A673 (cell line): ENCODE measurements at regions of chr12 and their contacts with region 1.

Region 1: DNA sequence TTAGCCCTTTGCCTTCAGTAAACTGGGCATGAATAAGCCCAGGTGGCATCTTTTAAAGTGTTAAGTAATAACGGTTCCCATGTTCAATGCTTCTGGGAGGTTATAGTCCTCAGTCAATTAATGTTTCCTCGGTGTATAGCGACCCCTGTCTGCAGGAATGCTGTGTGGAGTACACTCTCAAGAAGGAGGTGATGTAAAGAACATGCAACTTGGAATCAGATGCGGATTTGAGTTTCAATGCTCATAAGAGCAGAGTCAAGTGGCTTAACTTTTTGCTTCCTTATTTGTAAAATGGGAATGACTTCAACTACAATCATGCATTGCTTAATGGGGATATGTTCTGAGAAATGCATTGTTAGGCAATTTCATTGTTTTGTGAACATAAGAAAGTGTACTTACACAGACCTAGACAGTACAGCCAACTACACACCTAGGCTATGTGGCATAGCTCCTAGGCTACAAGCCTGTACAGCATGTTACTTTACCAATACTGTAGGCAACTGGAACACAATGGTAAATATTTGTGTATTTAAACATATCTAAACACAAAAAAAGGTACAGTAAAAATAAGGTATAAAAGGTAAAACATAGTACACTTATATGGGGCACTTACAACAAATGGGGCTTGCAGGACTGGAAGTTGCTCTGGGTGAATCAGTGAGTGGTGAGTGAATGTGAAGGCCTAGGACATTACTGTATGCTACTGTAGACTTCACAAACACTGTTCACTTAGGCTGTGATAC is 6.8 kb upstream of the MRPS35 start:
- DNase-seq: peak; percentile 89
- H3K4me3 ChIP-seq: no peak overlapping the region
- H3K27ac ChIP-seq: peak overlapping the region; percentile 17
- H3K4me1 ChIP-seq: no peaks in the 10 kb centered on the region
- H3K27me3 ChIP-seq: no peaks in the 10 kb centered on the region
- CTCF ChIP-seq: peak; percentile 94

Region 2: DNA sequence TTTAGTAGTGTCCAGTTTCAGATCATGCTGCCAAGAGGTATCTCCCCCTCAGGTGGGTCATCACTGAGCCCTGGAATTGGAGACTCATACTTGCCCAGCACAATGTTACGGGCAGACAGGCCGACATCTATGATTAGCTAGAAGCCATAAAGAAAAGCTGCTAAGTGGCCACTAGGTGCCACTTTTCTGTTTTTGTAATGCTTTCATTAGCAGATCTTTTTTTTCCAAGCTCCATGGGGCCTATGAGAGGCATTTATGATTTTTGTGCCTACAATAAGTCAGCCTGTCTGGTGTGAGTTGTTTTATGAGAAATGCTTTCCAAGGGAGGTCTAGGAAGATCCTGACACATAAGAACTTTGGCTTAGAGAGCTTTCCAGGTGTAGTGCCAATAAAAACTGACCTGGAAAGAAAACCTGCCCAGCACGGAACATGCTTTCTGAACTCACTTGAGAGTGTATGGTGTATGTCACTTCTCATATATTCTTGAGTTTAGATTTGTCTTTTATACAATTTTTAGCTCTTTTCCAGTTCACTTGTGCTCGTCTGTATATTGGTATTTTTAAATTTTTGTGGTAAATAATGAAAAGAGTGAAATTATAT is 279.1 kb before region 1 on chr12:
- CTCF ChIA-PET with region 1: interaction called, 3 read pairs
- POLR2A ChIA-PET with region 1: no interaction called
- intact Hi-C with region 1: loop called (anchors 5 kb)
- DNase-seq: peak; percentile 61
- H3K4me3 ChIP-seq: no peak overlapping the region
- H3K27ac ChIP-seq: no peak overlapping the region
- H3K4me1 ChIP-seq: no peaks in the 10 kb centered on the region
- H3K27me3 ChIP-seq: no peaks in the 10 kb centered on the region
- CTCF ChIP-seq: peak; percentile 63